ENCODE measurements at regions of chr17 and their contacts with region 1.

Region 1: DNA sequence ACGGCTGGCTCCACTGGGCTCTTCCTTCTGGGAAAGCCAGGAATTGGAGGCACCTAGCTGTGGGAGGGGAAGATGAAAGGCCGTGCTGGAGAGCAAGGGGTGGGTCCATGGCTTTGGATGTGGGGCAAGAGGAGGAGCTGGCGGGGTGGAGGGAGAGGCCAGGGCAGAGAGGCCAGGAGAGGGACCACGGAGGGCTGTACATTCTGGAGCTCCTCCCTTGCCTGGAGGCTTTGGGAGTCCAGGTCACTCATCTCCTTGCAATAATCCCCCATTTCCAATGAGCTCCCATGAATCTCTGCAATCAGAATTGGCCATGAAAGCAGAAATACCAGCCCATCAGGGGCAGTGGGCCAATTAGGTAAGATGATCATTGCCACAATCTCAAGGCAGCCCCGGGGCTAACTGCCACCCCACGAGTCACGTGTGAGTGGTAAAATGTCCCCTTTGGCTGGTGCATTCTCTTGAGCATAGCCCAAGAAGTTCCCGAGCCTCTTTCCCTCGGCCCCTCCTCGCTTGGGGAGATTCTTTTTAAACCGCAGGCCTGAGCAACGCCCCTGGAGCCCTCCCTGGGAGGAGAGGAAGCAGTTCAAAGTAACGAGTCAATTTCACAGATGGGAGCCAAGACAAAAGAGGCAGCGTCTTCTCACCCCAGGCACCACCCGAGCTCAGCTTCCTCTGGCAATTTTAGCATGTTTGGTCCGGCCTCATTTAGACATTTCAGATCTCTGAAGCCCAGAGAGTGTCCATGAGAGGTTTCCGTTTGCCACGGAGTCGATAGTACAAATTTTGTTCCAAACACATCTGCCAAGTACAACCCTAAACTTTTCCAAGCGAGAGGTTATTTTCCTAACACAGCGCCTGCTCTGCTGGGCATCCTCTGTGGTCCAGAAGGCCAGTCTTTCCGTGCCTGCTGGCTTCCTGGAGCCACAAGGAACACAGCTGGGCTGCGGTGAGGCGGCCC is 13.4 kb downstream of the RTN4RL1 start:
- DNase-seq: peak; percentile 97
- H3K4me3 ChIP-seq: peak overlapping the region; percentile 42
- H3K27ac ChIP-seq: peak overlapping the region; percentile 85
- H3K4me1 ChIP-seq: peaks cover 55% of the 10 kb centered on the region
- H3K27me3 ChIP-seq: no peaks in the 10 kb centered on the region
- CTCF ChIP-seq: no peak

Region 2: GRCh38 chr17:1977583-1978395 is 33.9 kb before region 1 on chr17:
- CTCF ChIA-PET with region 1: no interaction called
- POLR2A ChIA-PET with region 1: no interaction called
- intact Hi-C with region 1: no loop called
- DNase-seq: no peak
- H3K4me3 ChIP-seq: no peak overlapping the region
- H3K27ac ChIP-seq: no peak overlapping the region
- H3K4me1 ChIP-seq: 0 out of 2 replicates have a peak, but pooled peaks cover 7% of the 10 kb centered on the region
- H3K27me3 ChIP-seq: no peaks in the 10 kb centered on the region
- CTCF ChIP-seq: no peak

Region 3: DNA sequence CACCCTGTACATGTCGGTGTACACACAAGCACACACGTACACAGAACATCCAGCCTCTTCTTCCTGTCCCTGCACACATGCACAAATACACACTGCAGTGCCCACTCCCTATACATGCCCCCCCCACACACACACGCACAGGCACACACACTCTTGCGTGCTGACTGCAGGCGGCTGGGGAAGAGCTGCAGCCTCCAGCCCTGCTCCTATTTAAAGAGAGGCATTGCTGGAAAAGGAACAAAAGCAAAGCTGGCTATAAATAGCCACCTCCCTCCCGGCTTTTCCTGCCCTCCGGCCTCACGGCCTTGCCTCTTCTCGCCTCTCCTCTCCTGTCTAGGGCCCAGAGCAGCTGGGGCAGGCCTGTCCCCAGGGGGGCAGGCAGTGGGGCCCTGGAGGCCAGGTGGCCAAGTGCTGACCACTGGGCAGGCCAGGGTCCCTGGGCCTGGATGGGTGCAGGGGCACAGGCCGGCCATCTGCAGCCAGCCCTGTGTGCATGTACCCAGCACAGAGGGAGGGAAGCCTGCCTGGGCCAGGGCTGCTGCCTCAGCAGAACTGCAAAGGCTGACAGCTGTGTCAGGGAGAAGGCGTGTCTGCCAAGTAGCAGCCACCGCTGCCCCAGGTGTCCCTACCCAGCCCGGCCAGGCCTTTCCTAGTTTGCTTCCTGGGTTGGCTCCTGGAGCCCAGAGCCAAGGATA is 12.0 kb before region 1 on chr17:
- CTCF ChIA-PET with region 1: no interaction called
- POLR2A ChIA-PET with region 1: interaction called, 12 read pairs
- intact Hi-C with region 1: no loop called
- DNase-seq: peak in 1 of 2 experiments; percentile 54
- H3K4me3 ChIP-seq: no peak overlapping the region
- H3K27ac ChIP-seq: no peak overlapping the region
- H3K4me1 ChIP-seq: peaks cover 12% of the 10 kb centered on the region
- H3K27me3 ChIP-seq: no peaks in the 10 kb centered on the region
- CTCF ChIP-seq: no peak

Measured in PC-9 (cell line).